Ascending aorta (tissue), 2 donors: ENCODE measurements at regions of chr11 and their contacts with region 1.

Region 1: GRCh38 chr11:29272019-29272654 is 744.7 kb downstream of the KCNA4 start:
- DNase-seq: no peak
- H3K4me3 ChIP-seq: no peak overlapping the region
- H3K27ac ChIP-seq: no peak overlapping the region
- H3K4me1 ChIP-seq: no peaks in the 10 kb centered on the region
- H3K27me3 ChIP-seq: no peaks in the 10 kb centered on the region
- CTCF ChIP-seq: no peak

Region 2: GRCh38 chr11:29184939-29185890 is 86.9 kb before region 1 on chr11:
- intact Hi-C with region 1: no loop called
- DNase-seq: no peak
- H3K4me3 ChIP-seq: no peak overlapping the region
- H3K27ac ChIP-seq: no peak overlapping the region
- H3K4me1 ChIP-seq: no peaks in the 10 kb centered on the region
- H3K27me3 ChIP-seq: no peaks in the 10 kb centered on the region
- CTCF ChIP-seq: no peak

Region 3: GRCh38 chr11:29328961-29329441 is 56.9 kb after region 1 on chr11:
- intact Hi-C with region 1: loop called (anchors 5 kb)
- DNase-seq: no peak
- H3K4me3 ChIP-seq: no peak overlapping the region
- H3K27ac ChIP-seq: no peak overlapping the region
- H3K4me1 ChIP-seq: no peaks in the 10 kb centered on the region
- H3K27me3 ChIP-seq: no peaks in the 10 kb centered on the region
- CTCF ChIP-seq: peak; percentile 30 to 63 (median 36)